CD14-positive monocyte (primary cell): ENCODE measurements at regions of chr1 and their contacts with region 1.

Region 1: DNA sequence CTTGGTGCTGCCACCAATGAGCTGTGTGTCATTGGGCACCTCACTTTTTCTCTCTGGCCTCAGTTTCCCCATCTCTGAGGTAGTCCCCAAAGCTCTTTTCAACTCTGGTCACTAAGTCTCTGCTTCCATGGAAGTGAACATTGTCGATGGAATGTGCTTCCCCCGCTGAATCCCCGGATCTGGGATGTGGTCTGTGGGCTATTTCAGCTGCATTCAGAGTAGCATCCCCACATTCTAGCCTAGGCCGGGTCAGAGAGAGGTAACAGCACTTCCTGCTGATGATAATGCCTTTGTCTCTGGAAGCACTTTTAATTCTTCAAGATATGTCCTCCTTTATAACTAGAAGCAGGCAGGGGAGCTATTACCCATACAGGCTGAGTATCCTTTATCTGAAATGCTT is 29.8 kb downstream of the RASSF5 start:
- DNase-seq: no peak
- H3K4me3 ChIP-seq: no peak overlapping the region
- H3K4me3 Mint-ChIP-seq: no peak overlapping the region
- H3K27ac ChIP-seq: no peak overlapping the region
- H3K27ac Mint-ChIP-seq: peak overlapping the region in 1 of 7 donors; percentile 34
- H3K4me1 ChIP-seq: no peaks in the 10 kb centered on the region
- H3K4me1 Mint-ChIP-seq: no peaks in the 10 kb centered on the region
- H3K27me3 ChIP-seq: no peaks in the 10 kb centered on the region
- H3K27me3 Mint-ChIP-seq: peaks cover 0 to 8% (median 4%) of the 10 kb centered on the region in 3 donors
- CTCF ChIP-seq: no peak

Region 2: DNA sequence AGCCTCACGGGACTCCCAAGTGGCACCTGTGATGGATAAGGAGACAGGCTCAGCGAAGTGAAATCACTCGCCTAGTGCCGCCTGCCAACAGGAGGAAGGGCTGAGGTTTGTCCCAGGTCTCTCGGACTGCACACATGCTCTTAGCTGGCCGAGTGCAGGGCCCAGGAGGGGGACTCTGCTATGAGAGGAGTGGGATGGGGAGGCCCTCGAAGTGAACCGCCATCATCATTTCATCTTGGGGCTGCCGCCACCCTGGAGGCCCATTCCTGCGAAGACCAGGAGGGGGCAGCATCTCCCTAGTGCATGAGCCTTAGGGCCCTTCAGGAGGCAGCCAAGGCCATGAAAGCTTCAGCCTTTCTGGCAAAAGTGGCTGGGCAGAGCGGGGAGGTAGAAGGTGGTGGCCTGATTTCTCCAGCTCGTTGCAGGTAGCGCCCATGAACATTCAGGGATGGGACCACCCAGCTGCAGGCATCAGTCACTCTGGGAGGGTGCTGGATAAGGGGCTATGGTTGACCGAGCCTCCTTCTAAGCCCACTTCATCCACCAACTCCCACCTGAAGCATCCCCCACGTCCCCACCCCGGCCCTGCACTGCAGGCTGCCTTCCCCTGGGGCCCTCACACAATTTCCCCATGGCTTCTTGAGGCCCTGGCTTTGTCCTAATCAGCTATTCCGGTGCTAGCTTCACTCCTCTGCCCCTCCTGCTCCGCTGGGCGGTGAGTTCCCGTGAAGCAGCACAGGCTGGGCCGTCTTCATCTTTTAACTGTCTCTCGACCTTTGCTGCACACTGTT is 47.0 kb before region 1 on chr1:
- intact Hi-C with region 1: loop called (anchors 5 kb)
- DNase-seq: peak; percentile 40 to 63 (median 43)
- H3K4me3 ChIP-seq: no peak overlapping the region
- H3K4me3 Mint-ChIP-seq: no peak overlapping the region
- H3K27ac ChIP-seq: no peak overlapping the region
- H3K27ac Mint-ChIP-seq: peak overlapping the region in 3 of 7 donors; percentile 40 to 59 (median 50)
- H3K4me1 ChIP-seq: peaks cover 17 to 20% of the 10 kb centered on the region in 2 donors
- H3K4me1 Mint-ChIP-seq: peaks cover 21% of the 10 kb centered on the region
- H3K27me3 ChIP-seq: no peaks in the 10 kb centered on the region
- H3K27me3 Mint-ChIP-seq: peaks cover 0 to 2% (median 0%) of the 10 kb centered on the region in 3 donors
- CTCF ChIP-seq: peak; percentile 85

Region 3: DNA sequence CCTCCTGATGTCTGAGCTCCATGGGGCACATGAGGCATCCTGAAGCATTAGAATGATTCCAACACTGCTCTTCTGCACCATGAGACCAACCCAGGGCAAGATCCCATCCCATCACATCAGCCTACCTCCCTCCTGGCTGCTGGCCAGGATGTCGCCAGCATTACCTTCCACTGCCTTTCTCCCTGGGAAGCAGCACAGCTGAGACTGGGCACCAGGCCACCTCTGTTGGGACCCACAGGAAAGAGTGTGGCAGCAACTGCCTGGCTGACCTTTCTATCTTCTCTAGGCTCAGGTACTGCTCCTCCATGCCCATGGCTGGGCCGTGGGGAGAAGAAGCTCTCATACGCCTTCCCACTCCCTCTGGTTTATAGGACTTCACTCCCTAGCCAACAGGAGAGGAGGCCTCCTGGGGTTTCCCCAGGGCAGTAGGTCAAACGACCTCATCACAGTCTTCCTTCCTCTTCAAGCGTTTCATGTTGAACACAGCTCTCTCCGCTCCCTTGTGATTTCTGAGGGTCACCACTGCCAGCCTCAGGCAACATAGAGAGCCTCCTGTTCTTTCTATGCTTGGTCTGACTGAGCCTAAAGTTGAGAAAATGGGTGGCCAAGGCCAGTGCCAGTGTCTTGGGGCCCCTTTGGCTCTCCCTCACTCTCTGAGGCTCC is 40.9 kb before region 1 on chr1:
- intact Hi-C with region 1: loop called (anchors 5 kb)
- DNase-seq: peak; percentile 38 to 78 (median 43)
- H3K4me3 ChIP-seq: no peak overlapping the region
- H3K4me3 Mint-ChIP-seq: peak overlapping the region in 1 of 2 donors; percentile 58
- H3K27ac ChIP-seq: no peak overlapping the region
- H3K27ac Mint-ChIP-seq: peak overlapping the region in 6 of 7 donors; percentile 56 to 90 (median 74)
- H3K4me1 ChIP-seq: peaks cover 20 to 23% of the 10 kb centered on the region in 2 donors
- H3K4me1 Mint-ChIP-seq: peaks cover 29% of the 10 kb centered on the region
- H3K27me3 ChIP-seq: no peaks in the 10 kb centered on the region
- H3K27me3 Mint-ChIP-seq: peaks cover 0 to 3% (median 0%) of the 10 kb centered on the region in 3 donors
- CTCF ChIP-seq: no peak

Region 4: GRCh38 chr1:206608108-206608698 is 71.1 kb after region 1 on chr1:
- intact Hi-C with region 1: no loop called
- DNase-seq: peak; percentile 11 to 41 (median 12)
- H3K4me3 ChIP-seq: no peak overlapping the region
- H3K4me3 Mint-ChIP-seq: no peak overlapping the region
- H3K27ac ChIP-seq: no peak overlapping the region
- H3K27ac Mint-ChIP-seq: peak overlapping the region in 1 of 7 donors; percentile 26
- H3K4me1 ChIP-seq: peaks cover 10 to 12% of the 10 kb centered on the region in 2 donors
- H3K4me1 Mint-ChIP-seq: peaks cover 11% of the 10 kb centered on the region
- H3K27me3 ChIP-seq: no peaks in the 10 kb centered on the region
- H3K27me3 Mint-ChIP-seq: no peaks in the 10 kb centered on the region
- CTCF ChIP-seq: peak; percentile 81